Common myeloid progenitor, CD34-positive (primary cell): ENCODE measurements at regions of chr6 and their contacts with region 1.

Region 1: DNA sequence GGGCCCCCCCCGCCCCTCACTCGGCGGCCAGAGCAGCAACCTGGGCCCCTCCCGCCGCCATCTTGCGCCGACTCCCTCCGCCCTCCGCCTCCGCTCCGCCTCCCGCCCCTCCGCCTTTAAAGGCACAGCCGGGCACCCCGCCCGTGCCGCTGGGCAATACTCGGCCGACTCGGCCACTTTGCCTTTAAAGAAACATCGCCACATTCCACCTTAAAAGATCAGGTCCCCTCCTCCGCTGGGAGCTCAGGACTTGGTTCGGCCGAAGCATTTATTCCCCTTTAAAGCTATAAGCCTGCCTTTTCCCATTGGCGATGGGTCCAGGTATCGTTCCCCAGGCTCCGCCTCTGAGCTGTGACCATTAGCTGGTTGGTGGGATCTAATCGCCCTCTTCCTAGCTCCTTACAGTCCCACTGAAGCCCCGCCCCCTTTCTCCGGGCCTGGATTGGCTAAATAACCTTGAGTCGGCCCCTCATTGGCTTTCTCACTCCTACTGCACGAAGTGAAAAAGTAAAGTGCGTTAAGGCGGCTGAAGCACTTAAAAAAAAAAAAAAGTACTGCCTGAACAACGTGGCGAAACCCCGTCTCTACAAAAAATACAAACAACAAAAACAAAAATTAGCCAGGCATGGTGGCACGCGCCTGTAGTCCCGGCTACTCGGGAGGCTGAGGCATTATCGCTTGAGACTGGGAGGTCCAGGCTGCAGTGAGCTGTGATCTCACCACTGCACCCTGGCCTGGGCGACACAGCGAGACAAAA is at the start of gene ZBTB22:
- DNase-seq: peak; percentile 99 to 100 (median 99)
- H3K4me3 ChIP-seq: peak within 1 kb of the TSS; percentile 72 to 91 (median 84)
- H3K27ac ChIP-seq: peak within 1 kb of the TSS; percentile 50 to 84
- H3K4me1 ChIP-seq: peaks cover 3 to 73% (median 46%) of the 10 kb centered on the region in 4 experiments
- H3K27me3 ChIP-seq: no peaks in the 10 kb centered on the region

Region 2: GRCh38 chr6:33147807-33148666 is 169.8 kb before region 1 on chr6:
- CTCF ChIA-PET with region 1: no interaction called
- POLR2A ChIA-PET with region 1: no interaction called
- DNase-seq: peak; percentile 38 to 52 (median 40)
- H3K4me3 ChIP-seq: no peak overlapping the region
- H3K27ac ChIP-seq: no peak overlapping the region
- H3K4me1 ChIP-seq: peaks cover 0 to 13% (median 10%) of the 10 kb centered on the region in 4 experiments
- H3K27me3 ChIP-seq: no peaks in the 10 kb centered on the region

Region 3: DNA sequence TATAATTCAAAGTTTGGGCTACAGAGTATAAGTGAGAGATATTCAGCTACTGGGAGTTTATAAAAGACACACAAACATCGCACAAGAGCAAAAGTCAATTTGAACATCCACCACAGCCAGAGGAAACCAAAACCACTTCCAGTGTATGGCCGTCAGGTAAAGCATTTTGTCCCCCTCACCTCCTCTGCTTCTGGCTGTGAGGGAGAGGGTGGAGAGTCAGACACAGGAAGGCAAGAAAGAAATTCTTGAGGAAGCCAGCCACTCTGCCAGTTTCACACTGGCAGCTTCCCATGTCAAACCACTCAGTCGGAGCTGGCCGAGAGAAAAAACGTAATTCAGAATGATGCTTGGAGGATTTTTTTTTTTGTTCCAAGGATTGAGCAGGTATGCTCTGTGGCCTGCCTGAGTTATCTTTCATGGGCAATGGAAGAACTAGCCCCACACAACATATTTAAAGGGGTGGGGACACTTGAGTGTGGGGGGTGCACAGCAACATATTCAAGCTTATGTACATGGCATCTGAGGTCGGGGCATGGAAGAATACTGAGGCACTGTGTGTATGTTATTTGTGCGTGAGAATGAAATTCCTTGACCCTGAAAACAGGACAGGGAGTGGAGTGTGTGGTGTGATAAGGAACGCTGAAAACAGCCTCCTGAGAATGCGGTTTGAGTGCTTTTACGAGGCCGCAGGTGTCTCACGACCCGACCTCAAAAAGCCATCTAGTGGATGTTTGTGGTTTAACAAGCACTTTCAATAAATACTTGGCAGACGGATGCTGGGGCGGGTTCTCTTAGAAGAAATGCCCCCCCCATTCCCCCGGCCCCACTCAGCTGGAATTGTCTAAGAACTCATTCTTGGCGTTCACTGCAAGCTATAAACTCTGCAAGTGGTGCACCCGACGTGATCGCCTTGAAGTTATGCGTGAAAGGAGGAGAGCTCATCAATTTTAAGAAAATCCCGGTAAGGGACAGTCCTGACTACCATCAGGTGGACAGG is 27.2 kb after region 1 on chr6:
- CTCF ChIA-PET with region 1: interaction called, 18 read pairs
- POLR2A ChIA-PET with region 1: interaction called, 5 read pairs
- DNase-seq: peak; percentile 88 to 93 (median 92)
- H3K4me3 ChIP-seq: peak overlapping the region in 6 of 7 experiments; percentile 25 to 69 (median 49)
- H3K27ac ChIP-seq: peak overlapping the region; percentile 73 to 77
- H3K4me1 ChIP-seq: peaks cover 13 to 23% (median 21%) of the 10 kb centered on the region in 4 experiments
- H3K27me3 ChIP-seq: no peaks in the 10 kb centered on the region